ENCODE measurements at regions of chr4 and their contacts with region 1.

Region 1: DNA sequence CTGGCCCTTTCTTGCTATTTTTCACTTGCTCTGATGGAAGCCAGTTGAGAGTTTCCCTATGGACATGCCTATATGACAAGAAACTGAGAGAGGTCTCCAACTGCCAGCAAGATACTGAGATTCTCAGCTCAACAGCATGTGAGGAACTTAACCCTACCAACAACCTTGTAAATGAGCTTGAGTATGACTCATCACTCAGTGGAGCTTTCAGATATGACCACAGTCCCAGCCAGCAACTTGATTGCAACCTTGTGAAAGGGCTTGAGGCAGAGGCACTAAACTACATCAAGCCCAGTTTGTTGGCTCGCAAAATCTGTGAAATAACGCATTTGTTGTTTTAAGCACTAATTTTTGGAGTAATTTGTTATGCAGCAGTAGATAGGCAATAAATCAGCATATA is 175.8 kb downstream of the COMMD8 start:
- DNase-seq: no peak

Region 2: GRCh38 chr4:47209833-47210232 is 77.9 kb before region 1 on chr4:
- intact Hi-C with region 1: loop called in 1 of 2 experiments (anchors 2 kb)
- DNase-seq: no peak

Region 3: GRCh38 chr4:48673537-48673936 is 1385.8 kb after region 1 on chr4:
- intact Hi-C with region 1: no loop called
- DNase-seq: no peak